Naive thymus-derived CD4-positive, alpha-beta T cell (primary cell): ENCODE measurements at regions of chr6 and their contacts with region 1.

Region 1: DNA sequence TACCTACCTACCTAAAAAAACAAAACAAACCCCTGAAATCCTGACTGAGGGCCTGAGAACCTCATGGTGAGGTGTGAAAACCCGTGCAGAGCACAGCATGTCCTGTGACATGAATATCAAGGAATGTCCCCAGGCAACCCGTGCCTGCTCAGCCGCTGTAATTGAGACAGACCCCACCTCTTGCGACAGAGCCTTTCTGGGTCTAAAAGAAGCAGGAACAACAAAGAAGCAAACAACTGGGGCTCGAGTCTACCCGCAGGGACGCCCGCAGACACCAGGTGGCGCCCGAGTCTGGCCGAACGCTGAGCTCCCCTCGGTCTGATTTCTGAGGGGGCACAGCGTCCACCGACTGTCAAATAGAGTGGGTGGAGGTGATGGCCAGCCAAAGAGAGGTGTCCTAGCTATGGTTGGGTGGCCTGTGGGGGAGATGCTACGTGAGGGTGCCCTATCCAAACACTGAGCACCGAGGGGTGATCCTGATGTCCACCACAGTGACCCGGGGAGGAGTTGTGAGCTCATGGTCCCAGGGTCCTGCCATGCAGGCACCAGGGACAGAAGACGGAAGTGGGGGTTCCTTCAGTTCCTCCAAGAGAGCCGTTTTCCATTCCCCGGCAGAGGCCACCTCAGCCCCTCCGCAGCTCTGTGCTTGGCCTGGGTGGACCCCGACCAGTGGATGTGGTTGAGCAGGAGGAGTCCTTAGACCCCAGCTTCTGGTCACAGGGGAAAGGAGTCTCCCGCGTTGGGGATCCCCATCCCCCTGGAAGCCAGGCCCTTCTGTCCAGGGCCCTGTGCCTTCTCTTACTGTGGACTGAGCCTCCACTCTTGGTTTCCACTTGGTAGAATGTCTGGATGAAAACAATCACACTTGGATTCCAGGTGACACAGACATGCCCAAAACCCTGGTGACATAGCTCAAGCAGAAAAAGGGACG is 268.2 kb downstream of the CDC5L start:
- DNase-seq: peak; percentile 33 to 79 (median 65)
- ATAC-seq: peak; percentile 84
- H3K4me3 ChIP-seq: no peak overlapping the region
- H3K4me3 Mint-ChIP-seq: peak overlapping the region in 8 of 10 donors; percentile 26 to 72 (median 64)
- H3K27ac ChIP-seq: no peak overlapping the region
- H3K27ac Mint-ChIP-seq: peak overlapping the region; percentile 37 to 96 (median 79)
- H3K4me1 ChIP-seq: peaks cover 0 to 9% of the 10 kb centered on the region in 2 donors
- H3K4me1 Mint-ChIP-seq: peaks cover 6 to 16% (median 10%) of the 10 kb centered on the region in 7 donors
- H3K27me3 ChIP-seq: no peaks in the 10 kb centered on the region
- H3K27me3 Mint-ChIP-seq: peaks cover 0 to 12% (median 2%) of the 10 kb centered on the region in 5 donors

Region 2: DNA sequence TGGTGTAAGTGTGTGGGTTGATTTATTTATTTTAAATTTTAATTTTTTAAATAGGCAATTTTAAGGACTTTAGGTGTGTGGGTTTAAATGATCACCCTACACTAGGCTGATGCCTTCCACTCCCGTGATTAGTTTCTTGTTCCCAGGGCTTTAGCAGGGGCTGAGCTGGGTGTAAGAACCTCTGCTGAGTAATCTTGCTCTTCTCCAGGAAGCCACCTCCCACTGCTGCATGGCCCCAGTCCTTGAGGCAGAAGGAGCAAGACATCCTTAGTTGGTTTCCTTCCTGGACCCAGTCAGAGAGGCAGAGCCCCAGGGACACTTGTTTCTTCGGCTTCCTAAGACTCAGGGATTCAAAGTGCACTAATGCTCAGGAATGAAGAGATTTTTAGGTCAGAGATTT is 288.0 kb before region 1 on chr6:
- CTCF ChIA-PET with region 1: no interaction called
- POLR2A ChIA-PET with region 1: no interaction called
- intact Hi-C with region 1: no loop called
- DNase-seq: no peak
- ATAC-seq: no peak
- H3K4me3 ChIP-seq: no peak overlapping the region
- H3K4me3 Mint-ChIP-seq: no peak overlapping the region
- H3K27ac ChIP-seq: no peak overlapping the region
- H3K27ac Mint-ChIP-seq: no peak overlapping the region
- H3K4me1 ChIP-seq: no peaks in the 10 kb centered on the region
- H3K4me1 Mint-ChIP-seq: peaks cover 0 to 4% (median 0%) of the 10 kb centered on the region in 7 donors
- H3K27me3 ChIP-seq: no peaks in the 10 kb centered on the region
- H3K27me3 Mint-ChIP-seq: peaks cover 12 to 23% (median 14%) of the 10 kb centered on the region in 5 donors

Region 3: DNA sequence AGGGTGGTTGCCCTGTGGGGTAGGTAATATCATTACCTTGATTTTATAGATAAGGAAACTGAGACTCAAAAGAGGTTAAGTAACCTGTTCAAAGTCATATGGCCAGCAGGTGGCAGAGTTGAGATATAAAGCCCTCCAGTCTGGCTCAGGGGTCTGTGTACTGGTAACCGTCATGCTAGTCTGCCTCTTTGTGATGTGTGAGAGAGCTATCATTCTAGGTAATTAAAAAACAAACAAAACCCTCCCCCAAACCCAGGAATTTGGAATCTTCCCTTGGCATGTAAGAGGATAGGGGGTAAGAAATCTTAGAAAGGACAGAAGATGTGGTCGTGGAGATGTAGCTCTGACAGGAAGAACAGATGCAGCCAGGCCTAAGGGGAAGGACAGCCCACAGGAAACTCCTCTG is 62.1 kb before region 1 on chr6:
- CTCF ChIA-PET with region 1: interaction called, 3 read pairs
- POLR2A ChIA-PET with region 1: no interaction called
- intact Hi-C with region 1: loop called in 1 of 2 experiments (anchors 2 kb)
- DNase-seq: peak in 8 of 9 donors; percentile 8 to 48 (median 36)
- ATAC-seq: peak; percentile 63
- H3K4me3 ChIP-seq: no peak overlapping the region
- H3K4me3 Mint-ChIP-seq: no peak overlapping the region
- H3K27ac ChIP-seq: no peak overlapping the region
- H3K27ac Mint-ChIP-seq: peak overlapping the region in 1 of 9 donors; percentile 59
- H3K4me1 ChIP-seq: no peaks in the 10 kb centered on the region
- H3K4me1 Mint-ChIP-seq: peaks cover 0 to 9% (median 0%) of the 10 kb centered on the region in 7 donors
- H3K27me3 ChIP-seq: no peaks in the 10 kb centered on the region
- H3K27me3 Mint-ChIP-seq: peaks cover 11 to 20% (median 14%) of the 10 kb centered on the region in 5 donors

Region 4: GRCh38 chr6:45001663-45002062 is 346.0 kb after region 1 on chr6:
- CTCF ChIA-PET with region 1: no interaction called
- POLR2A ChIA-PET with region 1: no interaction called
- intact Hi-C with region 1: loop called in 1 of 2 experiments (anchors 10 kb)
- DNase-seq: peak in 3 of 9 donors; percentile 19 to 22 (median 21)
- ATAC-seq: peak; percentile 74
- H3K4me3 ChIP-seq: no peak overlapping the region
- H3K4me3 Mint-ChIP-seq: peak overlapping the region in 5 of 10 donors; percentile 8 to 49 (median 13)
- H3K27ac ChIP-seq: peak overlapping the region; percentile 2
- H3K27ac Mint-ChIP-seq: peak overlapping the region in 7 of 9 donors; percentile 14 to 87 (median 59)
- H3K4me1 ChIP-seq: peaks cover 4 to 7% of the 10 kb centered on the region in 2 donors
- H3K4me1 Mint-ChIP-seq: peaks cover 7 to 36% (median 26%) of the 10 kb centered on the region in 7 donors
- H3K27me3 ChIP-seq: no peaks in the 10 kb centered on the region
- H3K27me3 Mint-ChIP-seq: no peaks in the 10 kb centered on the region

Region 5: GRCh38 chr6:45327956-45328522 is 672.4 kb after region 1 on chr6 and contains the start of gene RUNX2:
- CTCF ChIA-PET with region 1: interaction called, 3 read pairs
- POLR2A ChIA-PET with region 1: no interaction called
- intact Hi-C with region 1: loop called in 1 of 2 experiments (anchors 5 kb)
- DNase-seq: peak in 5 of 9 donors; percentile 7 to 20 (median 14)
- ATAC-seq: peak; percentile 74
- H3K4me3 ChIP-seq: peak within 1 kb of the TSS; percentile 25
- H3K4me3 Mint-ChIP-seq: peak within 1 kb of the TSS; percentile 61 to 87 (median 78)
- H3K27ac ChIP-seq: peak within 1 kb of the TSS; percentile 28
- H3K27ac Mint-ChIP-seq: peak within 1 kb of the TSS; percentile 33 to 89 (median 73)
- H3K4me1 ChIP-seq: peaks cover 6 to 28% of the 10 kb centered on the region in 2 donors
- H3K4me1 Mint-ChIP-seq: peaks cover 26 to 85% (median 63%) of the 10 kb centered on the region in 7 donors
- H3K27me3 ChIP-seq: no peaks in the 10 kb centered on the region
- H3K27me3 Mint-ChIP-seq: no peaks in the 10 kb centered on the region
- total RNA-seq, gene RUNX2: 12.8 to 17.9 (median 14.0) TPM

Region 6: DNA sequence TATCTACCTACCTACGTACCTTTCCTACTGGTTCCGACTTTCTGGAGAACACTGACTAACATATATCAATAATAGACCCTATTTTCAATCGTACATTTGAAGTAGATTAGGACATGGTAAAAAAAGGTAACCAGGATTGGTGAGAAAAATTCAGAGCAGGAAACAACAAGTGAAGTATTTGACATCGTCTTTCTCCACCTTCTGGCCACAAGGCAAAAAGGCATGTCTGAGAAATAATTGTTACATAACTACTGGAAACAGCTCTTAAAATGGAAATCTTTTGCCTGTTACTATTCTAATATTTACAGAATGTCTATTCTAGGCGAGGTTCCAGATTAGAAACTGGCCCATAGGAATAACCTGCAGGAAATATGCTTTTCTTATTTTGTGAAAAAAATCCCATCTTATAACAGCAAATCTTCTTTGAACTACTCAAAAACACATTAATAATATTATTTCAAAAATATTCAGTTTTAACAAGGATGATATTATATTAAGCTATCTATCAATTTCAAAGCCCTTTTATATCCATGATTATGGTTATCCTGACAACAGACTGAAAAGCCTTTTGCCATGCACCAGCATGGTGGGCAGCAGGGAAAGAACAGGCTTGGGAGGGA is 1754.8 kb after region 1 on chr6:
- CTCF ChIA-PET with region 1: no interaction called
- POLR2A ChIA-PET with region 1: no interaction called
- intact Hi-C with region 1: loop called in 1 of 2 experiments (anchors 1 kb)
- DNase-seq: peak in 6 of 9 donors; percentile 20 to 61 (median 40)
- ATAC-seq: no peak
- H3K4me3 ChIP-seq: no peak overlapping the region
- H3K4me3 Mint-ChIP-seq: no peak overlapping the region
- H3K27ac ChIP-seq: no peak overlapping the region
- H3K27ac Mint-ChIP-seq: no peak overlapping the region
- H3K4me1 ChIP-seq: no peaks in the 10 kb centered on the region
- H3K4me1 Mint-ChIP-seq: no peaks in the 10 kb centered on the region
- H3K27me3 ChIP-seq: no peaks in the 10 kb centered on the region
- H3K27me3 Mint-ChIP-seq: peaks cover 0 to 4% (median 4%) of the 10 kb centered on the region in 5 donors